ENCODE measurements at regions of chr5 and their contacts with region 1.

Region 1: DNA sequence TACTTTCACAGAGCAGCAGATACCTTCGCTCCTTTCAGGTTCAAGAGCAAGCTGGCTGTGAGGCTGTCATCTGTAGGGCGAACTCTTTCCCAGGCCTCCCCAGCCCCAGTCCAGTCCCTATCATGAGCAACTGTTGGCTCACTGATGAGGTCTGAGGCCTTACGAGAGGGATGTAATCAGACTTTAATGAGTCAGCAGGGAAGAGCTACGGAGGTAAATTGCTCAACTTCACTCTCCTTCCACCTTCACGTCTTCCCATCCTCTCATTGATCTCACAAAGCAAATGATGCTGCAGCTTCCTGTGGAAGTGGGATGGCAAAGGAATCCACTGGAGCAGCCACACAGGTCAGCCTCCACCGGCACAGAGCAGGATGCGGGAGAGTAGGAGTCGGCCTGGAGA is 130.7 kb upstream of the TBCA start:
- DNase-seq: no peak
- H3K4me3 ChIP-seq: no peak overlapping the region
- H3K27ac ChIP-seq: no peak overlapping the region
- H3K27me3 ChIP-seq: peaks cover 0 to 12% (median 0%) of the 10 kb centered on the region in 45 donors
- CTCF ChIP-seq: no peak

Region 2: GRCh38 chr5:77816671-77817070 is 90.1 kb before region 1 on chr5:
- intact Hi-C with region 1: no loop called
- DNase-seq: no peak
- H3K4me3 ChIP-seq: no peak overlapping the region
- H3K27ac ChIP-seq: no peak overlapping the region
- H3K27me3 ChIP-seq: peaks cover 0 to 3% (median 0%) of the 10 kb centered on the region in 45 donors
- CTCF ChIP-seq: no peak

Region 3: GRCh38 chr5:77945874-77946273 is 39.1 kb after region 1 on chr5:
- intact Hi-C with region 1: loop called (anchors 2 to 5 kb)
- DNase-seq: peak in 9 of 10 donors; percentile 45 to 78 (median 66)
- H3K4me3 ChIP-seq: no peak overlapping the region
- H3K27ac ChIP-seq: peak overlapping the region in 57 of 59 donors; percentile 1 to 92 (median 80)
- H3K27me3 ChIP-seq: peaks cover 0 to 12% (median 0%) of the 10 kb centered on the region in 45 donors
- CTCF ChIP-seq: peak in 4 of 56 donors; percentile 10 to 38 (median 18)

Measured in dorsolateral prefrontal cortex (tissue), 120 donors.